CD8-positive, alpha-beta T cell (primary cell): ENCODE measurements at regions of chr7 and their contacts with region 1.

Region 1: DNA sequence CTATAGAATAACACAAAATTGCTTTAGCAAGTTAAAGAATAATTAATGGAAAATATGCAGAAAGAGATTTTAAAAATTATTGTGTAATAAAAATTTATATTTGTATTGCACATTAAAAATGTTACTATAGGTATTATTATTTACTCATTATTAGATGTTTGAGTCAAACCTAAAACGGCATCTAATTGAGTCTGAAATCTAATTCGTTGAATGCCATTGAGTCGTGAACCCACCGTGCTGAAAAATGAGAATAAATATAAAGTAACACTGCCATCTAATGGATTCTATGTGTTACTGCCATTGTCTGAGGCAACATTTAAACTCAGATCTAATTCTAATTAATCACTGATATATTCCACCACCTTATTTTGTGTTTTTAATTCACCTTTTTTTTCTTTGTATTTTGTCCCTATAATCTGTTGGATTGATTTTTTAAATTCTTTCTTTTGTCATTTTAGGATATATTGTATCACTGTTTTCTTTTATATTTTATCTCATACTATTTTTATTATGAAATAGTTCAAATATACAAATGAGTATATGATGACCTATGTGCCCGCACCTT is 62.2 kb downstream of the SAMD9 start:
- DNase-seq: peak in 2 of 9 experiments; percentile 49 to 65
- ATAC-seq: peak; percentile 79
- H3K4me3 ChIP-seq: no peak overlapping the region
- H3K4me3 Mint-ChIP-seq: no peak overlapping the region
- H3K27ac ChIP-seq: no peak overlapping the region
- H3K27ac Mint-ChIP-seq: no peak overlapping the region
- H3K4me1 ChIP-seq: no peaks in the 10 kb centered on the region
- H3K4me1 Mint-ChIP-seq: no peaks in the 10 kb centered on the region
- H3K27me3 ChIP-seq: no peaks in the 10 kb centered on the region
- H3K27me3 Mint-ChIP-seq: no peaks in the 10 kb centered on the region
- CTCF ChIP-seq: peak; percentile 98

Region 2: GRCh38 chr7:92421676-92422435 is 633.8 kb before region 1 on chr7:
- CTCF ChIA-PET with region 1: interaction called, 4 read pairs
- POLR2A ChIA-PET with region 1: no interaction called
- intact Hi-C with region 1: loop called (anchors 1 to 2 kb)
- DNase-seq: no peak
- ATAC-seq: no peak
- H3K4me3 ChIP-seq: no peak overlapping the region
- H3K4me3 Mint-ChIP-seq: no peak overlapping the region
- H3K27ac ChIP-seq: no peak overlapping the region
- H3K27ac Mint-ChIP-seq: no peak overlapping the region
- H3K4me1 ChIP-seq: no peaks in the 10 kb centered on the region
- H3K4me1 Mint-ChIP-seq: peaks cover 9% of the 10 kb centered on the region
- H3K27me3 ChIP-seq: peaks cover 0 to 10% of the 10 kb centered on the region in 2 experiments
- H3K27me3 Mint-ChIP-seq: peaks cover 19% of the 10 kb centered on the region
- CTCF ChIP-seq: no peak

Region 3: GRCh38 chr7:92691578-92691977 is 364.0 kb before region 1 on chr7:
- CTCF ChIA-PET with region 1: no interaction called
- POLR2A ChIA-PET with region 1: no interaction called
- intact Hi-C with region 1: loop called (anchors 1 to 2 kb)
- DNase-seq: peak in 3 of 9 experiments; percentile 17 to 68 (median 49)
- ATAC-seq: peak; percentile 86
- H3K4me3 ChIP-seq: no peak overlapping the region
- H3K4me3 Mint-ChIP-seq: no peak overlapping the region
- H3K27ac ChIP-seq: no peak overlapping the region
- H3K27ac Mint-ChIP-seq: no peak overlapping the region
- H3K4me1 ChIP-seq: peaks cover 11% of the 10 kb centered on the region
- H3K4me1 Mint-ChIP-seq: peaks cover 30% of the 10 kb centered on the region
- H3K27me3 ChIP-seq: no peaks in the 10 kb centered on the region
- H3K27me3 Mint-ChIP-seq: no peaks in the 10 kb centered on the region
- CTCF ChIP-seq: peak; percentile 73